ENCODE measurements at regions of chr19 and their contacts with region 1.

Region 1: DNA sequence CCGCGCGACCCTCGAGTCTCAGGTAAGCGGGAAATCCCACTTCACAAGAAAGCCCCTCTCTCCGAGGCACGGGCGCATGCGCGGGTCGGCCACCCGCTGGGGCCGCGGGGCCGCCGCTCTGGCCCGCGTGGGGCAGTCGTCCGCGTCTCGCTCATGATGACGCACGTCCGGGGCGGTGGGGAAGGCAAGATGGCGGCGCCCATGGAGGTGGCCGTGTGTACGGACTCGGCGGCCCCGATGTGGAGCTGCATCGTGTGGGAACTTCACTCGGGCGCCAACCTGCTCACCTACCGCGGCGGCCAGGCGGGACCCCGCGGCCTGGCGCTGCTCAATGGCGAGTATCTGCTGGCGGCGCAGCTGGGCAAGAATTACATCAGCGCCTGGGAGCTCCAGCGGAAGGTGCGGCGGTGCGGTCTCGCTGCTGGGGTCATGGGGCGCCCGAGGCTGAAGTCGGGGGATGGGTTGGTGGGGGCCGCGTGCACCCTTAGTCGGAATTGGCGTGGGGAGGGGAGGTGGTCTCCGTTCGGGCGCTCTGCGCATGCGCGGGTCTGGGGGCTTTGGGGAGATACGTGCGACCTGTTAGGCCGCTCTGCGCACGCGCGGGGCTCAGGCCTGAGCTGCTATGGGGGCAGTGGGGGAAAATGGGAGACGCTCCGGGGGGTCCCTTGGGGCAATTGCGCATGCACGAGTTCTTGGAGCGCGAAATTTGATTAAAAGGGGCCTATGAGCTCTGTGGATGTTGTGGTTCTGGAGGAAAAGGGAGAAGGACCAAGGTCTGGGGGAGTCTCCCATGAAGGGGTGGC is at the start of gene WDR18:
- DNase-seq: peak; percentile 94
- ATAC-seq: peak; percentile 94
- H3K4me3 Mint-ChIP-seq: peak within 1 kb of the TSS; percentile 92
- H3K27ac Mint-ChIP-seq: peak within 1 kb of the TSS; percentile 91
- H3K4me1 Mint-ChIP-seq: peaks cover 21% of the 10 kb centered on the region
- H3K27me3 Mint-ChIP-seq: no peaks in the 10 kb centered on the region
- CTCF ChIP-seq: no peak
- total RNA-seq, gene WDR18: 75.3 to 78.1 TPM

Region 2: DNA sequence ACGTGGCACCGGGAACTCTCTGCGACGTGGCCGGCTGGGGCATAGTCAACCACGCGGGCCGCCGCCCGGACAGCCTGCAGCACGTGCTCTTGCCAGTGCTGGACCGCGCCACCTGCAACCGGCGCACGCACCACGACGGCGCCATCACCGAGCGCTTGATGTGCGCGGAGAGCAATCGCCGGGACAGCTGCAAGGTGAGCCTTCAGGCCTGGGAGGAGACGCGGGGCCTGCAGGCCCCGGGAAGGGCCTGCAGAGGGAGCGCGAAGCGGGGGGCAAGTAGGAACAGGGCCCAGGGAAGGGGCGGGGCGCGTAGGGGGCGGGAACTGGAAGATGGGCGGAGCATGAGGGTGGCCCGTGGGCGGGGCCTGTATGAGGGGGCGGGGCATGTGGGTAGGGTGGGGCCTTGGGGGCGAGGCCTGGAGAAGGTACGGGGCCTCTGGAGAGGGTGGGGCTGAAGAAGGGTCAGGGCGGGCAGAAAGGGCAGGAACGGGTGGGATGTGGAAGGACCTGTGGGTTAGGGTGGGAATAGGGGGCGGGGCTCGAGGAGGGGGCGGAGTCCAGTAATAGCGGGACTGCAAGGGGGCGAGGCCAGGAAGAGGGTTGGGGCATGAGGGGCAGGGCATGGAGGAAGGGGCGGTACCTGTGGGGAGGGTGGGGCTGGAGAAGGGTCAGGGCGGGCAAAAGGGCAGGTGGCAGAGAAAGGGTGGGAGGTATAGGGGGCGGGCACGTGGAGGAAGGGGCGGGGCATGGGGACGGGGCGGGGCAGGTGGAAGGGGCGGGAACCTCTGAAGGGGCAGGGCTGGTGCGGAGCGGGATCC is 122.4 kb before region 1 on chr19:
- CTCF ChIA-PET with region 1: interaction called, 31 read pairs
- POLR2A ChIA-PET with region 1: interaction called, 4 read pairs
- intact Hi-C with region 1: loop called (anchors 5 kb)
- DNase-seq: peak; percentile 72
- ATAC-seq: peak; percentile 47
- H3K4me3 Mint-ChIP-seq: no peak overlapping the region
- H3K27ac Mint-ChIP-seq: no peak overlapping the region
- H3K4me1 Mint-ChIP-seq: peaks cover 14% of the 10 kb centered on the region
- H3K27me3 Mint-ChIP-seq: peaks cover 13% of the 10 kb centered on the region
- CTCF ChIP-seq: no peak

Region 3: GRCh38 chr19:925526-926322 is 58.6 kb before region 1 on chr19 and contains the start of gene ARID3A:
- CTCF ChIA-PET with region 1: interaction called, 127 read pairs
- POLR2A ChIA-PET with region 1: interaction called, 29 read pairs
- intact Hi-C with region 1: loop called (anchors 2 kb)
- DNase-seq: peak; percentile 84
- ATAC-seq: peak; percentile 67
- H3K4me3 Mint-ChIP-seq: peak within 1 kb of the TSS; percentile 73
- H3K27ac Mint-ChIP-seq: peak within 1 kb of the TSS; percentile 76
- H3K4me1 Mint-ChIP-seq: peaks cover 19% of the 10 kb centered on the region
- H3K27me3 Mint-ChIP-seq: no peaks in the 10 kb centered on the region
- CTCF ChIP-seq: no peak
- total RNA-seq, gene ARID3A: 18.7 to 22.1 TPM

Region 4: DNA sequence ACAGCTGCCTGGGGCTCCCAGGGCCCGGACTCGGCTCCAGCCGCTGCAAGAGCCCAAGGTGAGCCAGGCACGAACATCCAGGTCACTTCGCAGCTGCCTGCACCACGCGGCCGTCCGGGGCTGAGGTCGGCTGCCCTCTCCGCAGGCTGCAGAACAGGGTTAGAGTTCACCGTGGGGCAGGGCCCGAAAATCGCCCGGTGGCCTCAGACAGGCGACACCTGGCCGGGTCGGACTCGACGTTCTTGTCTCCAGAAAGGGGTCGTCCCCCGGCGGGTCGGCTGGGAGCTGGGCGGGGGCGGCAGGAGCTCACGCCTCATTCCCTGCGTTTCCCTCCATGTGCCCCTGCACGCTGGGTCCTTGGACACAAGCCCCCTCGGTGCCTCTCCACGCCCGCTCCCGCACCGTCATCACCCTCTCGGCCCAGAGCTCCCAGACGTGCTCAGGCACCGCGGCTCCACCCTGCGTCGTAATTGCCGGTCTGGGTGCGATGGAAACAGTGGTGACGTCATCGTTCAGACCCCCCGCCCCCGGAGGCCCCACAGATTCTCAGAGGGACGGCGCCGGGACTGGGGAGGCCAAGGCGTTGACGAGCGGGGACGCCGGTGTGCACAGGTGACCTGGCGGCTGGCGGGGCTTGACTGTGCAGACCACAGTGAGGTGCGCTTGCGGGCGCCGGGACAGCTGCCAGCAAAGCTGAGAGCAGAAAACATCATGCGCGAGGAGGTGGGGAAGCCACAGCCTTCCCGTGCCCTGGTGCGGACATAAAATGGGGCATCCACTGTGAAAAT is 11.9 kb after region 1 on chr19:
- CTCF ChIA-PET with region 1: interaction called, 11 read pairs
- POLR2A ChIA-PET with region 1: interaction called, 37 read pairs
- intact Hi-C with region 1: no loop called
- DNase-seq: peak; percentile 86
- ATAC-seq: peak; percentile 38
- H3K4me3 Mint-ChIP-seq: peak overlapping the region; percentile 16
- H3K27ac Mint-ChIP-seq: no peak overlapping the region
- H3K4me1 Mint-ChIP-seq: peaks cover 9% of the 10 kb centered on the region
- H3K27me3 Mint-ChIP-seq: peaks cover 20% of the 10 kb centered on the region
- CTCF ChIP-seq: no peak

Region 5: DNA sequence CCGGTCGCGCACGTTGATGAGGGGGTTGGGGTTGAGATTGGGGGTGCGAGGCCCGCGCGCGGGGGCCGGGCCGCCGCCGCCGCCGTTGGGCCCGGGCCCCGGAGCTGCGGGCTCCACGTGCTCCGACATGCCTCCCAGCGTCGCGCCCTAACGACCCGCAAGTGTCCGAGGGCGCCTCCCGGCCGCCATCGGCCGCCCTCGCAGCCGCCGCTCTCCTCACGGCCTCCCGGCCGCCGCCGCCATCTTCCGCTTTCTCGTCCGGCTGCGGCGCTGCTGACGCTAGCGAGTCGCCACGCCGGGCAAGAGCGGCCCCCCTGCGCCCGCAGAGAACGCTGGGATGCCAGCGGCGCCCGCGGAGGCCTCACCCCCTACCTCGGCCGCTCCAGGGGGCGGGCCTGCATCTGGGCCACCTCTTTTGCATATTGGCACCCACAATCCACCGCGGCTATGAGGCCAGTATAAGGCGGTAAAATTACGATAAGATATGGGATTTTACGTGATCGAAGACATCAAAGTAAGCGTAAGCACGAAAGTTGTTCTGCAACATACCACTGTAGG is 36.6 kb after region 1 on chr19 and contains the start of gene TMEM259:
- CTCF ChIA-PET with region 1: interaction called, 4 read pairs
- POLR2A ChIA-PET with region 1: interaction called, 10 read pairs
- intact Hi-C with region 1: no loop called
- DNase-seq: peak; percentile 98
- ATAC-seq: peak; percentile 88
- H3K4me3 Mint-ChIP-seq: peak within 1 kb of the TSS; percentile 96
- H3K27ac Mint-ChIP-seq: peak within 1 kb of the TSS; percentile 99
- H3K4me1 Mint-ChIP-seq: peaks cover 34% of the 10 kb centered on the region
- H3K27me3 Mint-ChIP-seq: no peaks in the 10 kb centered on the region
- CTCF ChIP-seq: no peak
- total RNA-seq, gene TMEM259: 115 to 117 TPM

Measured in activated CD8-positive, alpha-beta T cell treated with anti-CD3 and anti-CD28 coated beads for 36 hours (primary cell).